ENCODE measurements at regions of chr9 and their contacts with region 1.

Region 1: DNA sequence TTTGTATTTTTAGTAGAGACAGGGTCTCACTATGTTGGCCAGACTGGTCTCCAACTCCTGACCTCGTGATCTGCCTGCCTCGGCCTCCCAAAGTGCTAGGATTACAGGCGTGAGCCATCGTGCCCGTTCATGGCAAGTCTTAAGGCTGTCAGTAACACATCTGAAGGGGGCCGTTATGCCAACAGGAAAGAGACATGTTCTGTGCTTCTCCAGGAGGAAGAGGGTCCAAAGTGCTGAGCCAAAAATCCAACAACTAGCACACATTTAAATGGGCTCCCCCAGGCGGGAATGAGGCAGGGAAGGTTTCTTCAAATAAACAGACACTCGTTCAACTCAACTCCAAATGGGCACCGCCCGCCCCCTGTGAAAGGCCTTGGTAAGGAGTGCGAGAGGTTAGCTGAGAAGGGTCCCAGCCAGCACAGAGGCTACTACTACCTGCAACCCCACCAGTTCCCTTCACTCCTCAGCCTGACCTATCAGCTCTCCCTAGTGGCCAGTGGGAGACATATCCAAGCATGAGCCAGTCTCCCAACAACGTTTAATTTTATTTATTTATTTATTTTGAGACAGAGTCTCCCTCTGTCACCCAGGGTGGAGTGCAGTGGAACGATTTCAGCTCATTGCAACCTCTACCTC is 84.1 kb upstream of the DMRT1 start:
- DNase-seq: peak; percentile 57 to 67
- H3K4me3 ChIP-seq: no peak overlapping the region
- H3K27ac ChIP-seq: no peak overlapping the region
- H3K4me1 ChIP-seq: no peaks in the 10 kb centered on the region
- H3K27me3 ChIP-seq: no peaks in the 10 kb centered on the region
- CTCF ChIP-seq: peak; percentile 70 to 89 (median 74)
- EP300 ChIP-seq: no peak
- POLR2A ChIP-seq: no peak
- RAD21 ChIP-seq: peak; percentile 92 to 93

Region 2: DNA sequence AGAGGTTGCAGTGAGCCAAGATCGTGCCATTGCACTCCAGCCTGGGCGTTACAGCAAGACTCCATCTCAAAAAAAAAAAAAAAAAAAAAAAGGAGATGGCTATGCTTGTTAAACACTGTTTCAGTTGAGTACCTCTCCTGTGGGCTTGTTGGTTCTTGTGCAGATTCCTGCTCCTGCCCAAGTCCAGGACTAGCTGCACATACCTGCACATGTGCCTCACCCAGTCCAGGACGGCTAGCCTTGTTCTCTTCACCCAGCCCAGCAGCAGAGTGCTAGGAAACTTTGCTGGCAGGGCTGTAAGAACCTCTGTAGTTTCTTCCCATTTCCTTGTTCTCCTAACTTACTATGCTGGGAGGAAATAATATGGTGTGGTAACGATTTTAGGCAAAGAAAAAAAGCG is 149.9 kb before region 1 on chr9:
- CTCF ChIA-PET with region 1: interaction called, 195 read pairs
- POLR2A ChIA-PET with region 1: interaction called, 3 read pairs
- DNase-seq: no peak
- H3K4me3 ChIP-seq: no peak overlapping the region
- H3K27ac ChIP-seq: no peak overlapping the region
- H3K4me1 ChIP-seq: no peaks in the 10 kb centered on the region
- H3K27me3 ChIP-seq: no peaks in the 10 kb centered on the region
- CTCF ChIP-seq: no peak
- EP300 ChIP-seq: no peak
- POLR2A ChIP-seq: no peak
- RAD21 ChIP-seq: no peak

Region 3: GRCh38 chr9:710951-711745 is 46.2 kb before region 1 on chr9:
- CTCF ChIA-PET with region 1: interaction called, 10 read pairs
- POLR2A ChIA-PET with region 1: no interaction called
- DNase-seq: no peak
- H3K4me3 ChIP-seq: no peak overlapping the region
- H3K27ac ChIP-seq: no peak overlapping the region
- H3K4me1 ChIP-seq: peaks cover 0 to 9% (median 4%) of the 10 kb centered on the region in 4 experiments; a peak in 6 of 7 replicates
- H3K27me3 ChIP-seq: no peaks in the 10 kb centered on the region
- CTCF ChIP-seq: no peak
- EP300 ChIP-seq: no peak
- POLR2A ChIP-seq: no peak
- RAD21 ChIP-seq: no peak

Region 4: GRCh38 chr9:745761-746380 is 11.5 kb before region 1 on chr9:
- CTCF ChIA-PET with region 1: interaction called, 10 read pairs
- POLR2A ChIA-PET with region 1: no interaction called
- DNase-seq: no peak
- H3K4me3 ChIP-seq: no peak overlapping the region
- H3K27ac ChIP-seq: no peak overlapping the region
- H3K4me1 ChIP-seq: peaks cover 0 to 7% (median 0%) of the 10 kb centered on the region in 4 experiments; a peak in 2 of 7 replicates
- H3K27me3 ChIP-seq: no peaks in the 10 kb centered on the region; a peak in 1 of 7 replicates
- CTCF ChIP-seq: no peak
- EP300 ChIP-seq: no peak
- POLR2A ChIP-seq: no peak
- RAD21 ChIP-seq: no peak